ENCODE measurements at regions of chr15 and their contacts with region 1.

Region 1: GRCh38 chr15:57146506-57147201 is 228.2 kb downstream of the TCF12 start:
- DNase-seq: no peak
- ATAC-seq: no peak
- H3K4me3 Mint-ChIP-seq: peak overlapping the region; percentile 48
- H3K27ac Mint-ChIP-seq: no peak overlapping the region
- H3K4me1 Mint-ChIP-seq: peaks cover 16% of the 10 kb centered on the region
- H3K27me3 Mint-ChIP-seq: no peaks in the 10 kb centered on the region
- CTCF ChIP-seq: peak; percentile 42

Region 2: DNA sequence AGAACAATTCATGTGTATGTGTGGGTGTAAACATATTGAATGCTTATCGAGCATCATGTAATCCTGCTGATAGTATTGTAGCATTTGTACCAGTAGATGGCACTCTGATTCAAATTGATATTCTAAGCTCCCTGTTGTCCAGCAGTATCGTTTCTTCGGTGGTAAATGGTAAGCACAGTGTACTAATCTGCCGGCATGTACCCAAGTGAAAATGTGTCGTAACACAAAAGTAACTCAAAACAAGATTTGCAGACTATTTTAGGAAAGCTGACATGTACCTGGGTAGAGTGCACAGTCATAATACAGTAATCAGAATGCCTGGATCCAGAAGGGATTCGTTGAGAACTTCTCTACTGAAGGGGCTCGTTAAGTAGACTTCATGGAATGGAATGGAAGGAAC is 650.0 kb before region 1 on chr15:
- CTCF ChIA-PET with region 1: interaction called, 11 read pairs
- POLR2A ChIA-PET with region 1: no interaction called
- intact Hi-C with region 1: loop called (anchors 1 kb)
- DNase-seq: no peak
- ATAC-seq: peak; percentile 81
- H3K4me3 Mint-ChIP-seq: peak overlapping the region; percentile 20
- H3K27ac Mint-ChIP-seq: no peak overlapping the region
- H3K4me1 Mint-ChIP-seq: peaks cover 4% of the 10 kb centered on the region
- H3K27me3 Mint-ChIP-seq: no peaks in the 10 kb centered on the region
- CTCF ChIP-seq: no peak

Region 3: GRCh38 chr15:56552668-56553067 is 594.0 kb before region 1 on chr15:
- CTCF ChIA-PET with region 1: no interaction called
- POLR2A ChIA-PET with region 1: no interaction called
- intact Hi-C with region 1: no loop called
- DNase-seq: no peak
- ATAC-seq: no peak
- H3K4me3 Mint-ChIP-seq: no peak overlapping the region
- H3K27ac Mint-ChIP-seq: no peak overlapping the region
- H3K4me1 Mint-ChIP-seq: no peaks in the 10 kb centered on the region
- H3K27me3 Mint-ChIP-seq: no peaks in the 10 kb centered on the region
- CTCF ChIP-seq: no peak

Region 4: GRCh38 chr15:57102858-57103257 is 43.8 kb before region 1 on chr15:
- CTCF ChIA-PET with region 1: no interaction called
- POLR2A ChIA-PET with region 1: no interaction called
- intact Hi-C with region 1: no loop called
- DNase-seq: no peak
- ATAC-seq: no peak
- H3K4me3 Mint-ChIP-seq: peak overlapping the region; percentile 62
- H3K27ac Mint-ChIP-seq: peak overlapping the region; percentile 59
- H3K4me1 Mint-ChIP-seq: peaks cover 53% of the 10 kb centered on the region
- H3K27me3 Mint-ChIP-seq: no peaks in the 10 kb centered on the region
- CTCF ChIP-seq: no peak

Region 5: DNA sequence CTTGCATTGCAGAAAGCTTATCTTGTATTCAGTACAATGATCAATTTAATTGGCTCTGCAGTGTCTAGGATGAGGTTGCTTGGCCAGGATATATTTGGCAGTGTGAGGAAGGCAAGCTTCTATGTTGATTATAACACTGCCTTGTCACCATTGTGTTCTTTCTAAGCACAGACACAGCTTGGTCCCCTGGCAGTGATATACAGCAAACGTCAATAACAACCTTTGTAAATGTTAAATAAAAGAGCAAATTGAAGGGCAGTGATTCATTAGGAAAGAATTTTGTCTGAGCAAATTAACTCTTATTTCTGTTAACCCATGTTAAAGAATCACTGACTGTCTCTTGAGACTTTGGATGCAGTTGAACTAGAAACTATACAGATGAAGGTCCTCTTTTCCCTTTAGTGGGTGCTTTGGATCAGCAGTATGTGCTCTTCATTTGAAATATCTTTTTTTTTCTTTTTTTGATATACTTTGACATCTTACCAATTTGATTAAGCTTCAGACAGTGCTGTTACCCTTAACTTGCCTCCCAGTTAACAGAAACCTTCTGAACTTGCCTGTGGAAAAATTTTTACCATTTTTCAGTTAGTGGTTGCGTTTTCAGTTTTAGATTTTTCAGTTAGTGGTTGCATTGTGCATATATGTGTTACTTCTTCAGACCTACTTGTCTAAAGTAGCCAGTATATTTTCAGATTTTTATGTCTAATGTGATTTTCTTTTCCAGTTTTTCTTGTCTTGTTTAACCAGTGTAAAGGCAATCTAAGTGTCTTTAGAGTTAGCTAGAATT is 28.4 kb before region 1 on chr15:
- CTCF ChIA-PET with region 1: no interaction called
- POLR2A ChIA-PET with region 1: no interaction called
- intact Hi-C with region 1: no loop called
- DNase-seq: no peak
- ATAC-seq: no peak
- H3K4me3 Mint-ChIP-seq: no peak overlapping the region
- H3K27ac Mint-ChIP-seq: peak overlapping the region; percentile 50
- H3K4me1 Mint-ChIP-seq: peaks cover 22% of the 10 kb centered on the region
- H3K27me3 Mint-ChIP-seq: no peaks in the 10 kb centered on the region
- CTCF ChIP-seq: no peak

Region 6: GRCh38 chr15:57165992-57166391 is 19.3 kb after region 1 on chr15:
- CTCF ChIA-PET with region 1: interaction called, 11 read pairs
- POLR2A ChIA-PET with region 1: no interaction called
- intact Hi-C with region 1: no loop called
- DNase-seq: no peak
- ATAC-seq: no peak
- H3K4me3 Mint-ChIP-seq: no peak overlapping the region
- H3K27ac Mint-ChIP-seq: no peak overlapping the region
- H3K4me1 Mint-ChIP-seq: peaks cover 13% of the 10 kb centered on the region
- H3K27me3 Mint-ChIP-seq: no peaks in the 10 kb centered on the region
- CTCF ChIP-seq: no peak

Region 7: DNA sequence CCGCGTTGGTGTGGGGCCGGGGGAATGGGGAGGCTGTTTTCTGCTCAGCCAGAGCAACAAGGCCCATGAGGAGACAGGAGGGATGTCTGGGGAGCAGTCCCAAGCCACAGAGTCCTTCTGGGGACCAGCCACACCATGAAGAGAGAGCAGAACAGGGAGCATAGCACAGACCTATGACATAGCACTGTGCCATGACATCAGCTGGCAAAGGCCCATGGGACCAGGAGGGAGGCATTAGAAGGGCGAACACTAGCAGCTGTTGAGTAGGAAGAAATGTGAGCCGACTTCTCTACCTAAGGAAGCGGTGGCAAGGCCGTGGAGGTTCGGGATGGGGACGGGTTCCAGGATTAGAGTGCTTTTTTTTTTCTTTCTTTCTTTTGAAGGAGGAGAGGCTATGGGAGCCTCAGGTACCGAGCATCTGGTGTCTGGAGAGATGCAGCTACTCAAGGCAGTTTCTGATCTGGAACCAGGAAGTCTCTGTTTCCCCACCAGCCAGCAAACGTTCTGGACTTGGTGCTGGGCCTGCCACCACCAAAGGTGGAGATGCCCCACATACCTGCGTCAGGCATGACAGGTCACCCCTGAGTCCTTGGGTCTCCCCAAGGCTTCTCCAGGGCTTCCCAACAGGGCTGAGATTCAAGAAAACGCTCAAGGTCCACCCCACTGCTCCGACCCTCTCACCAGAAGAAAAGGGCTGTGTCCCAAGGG is 152.3 kb after region 1 on chr15:
- CTCF ChIA-PET with region 1: interaction called, 202 read pairs
- POLR2A ChIA-PET with region 1: interaction called, 21 read pairs
- intact Hi-C with region 1: no loop called
- DNase-seq: peak; percentile 42
- ATAC-seq: no peak
- H3K4me3 Mint-ChIP-seq: peak overlapping the region; percentile 97
- H3K27ac Mint-ChIP-seq: peak overlapping the region; percentile 99
- H3K4me1 Mint-ChIP-seq: peaks cover 57% of the 10 kb centered on the region
- H3K27me3 Mint-ChIP-seq: no peaks in the 10 kb centered on the region
- CTCF ChIP-seq: no peak

Region 8: DNA sequence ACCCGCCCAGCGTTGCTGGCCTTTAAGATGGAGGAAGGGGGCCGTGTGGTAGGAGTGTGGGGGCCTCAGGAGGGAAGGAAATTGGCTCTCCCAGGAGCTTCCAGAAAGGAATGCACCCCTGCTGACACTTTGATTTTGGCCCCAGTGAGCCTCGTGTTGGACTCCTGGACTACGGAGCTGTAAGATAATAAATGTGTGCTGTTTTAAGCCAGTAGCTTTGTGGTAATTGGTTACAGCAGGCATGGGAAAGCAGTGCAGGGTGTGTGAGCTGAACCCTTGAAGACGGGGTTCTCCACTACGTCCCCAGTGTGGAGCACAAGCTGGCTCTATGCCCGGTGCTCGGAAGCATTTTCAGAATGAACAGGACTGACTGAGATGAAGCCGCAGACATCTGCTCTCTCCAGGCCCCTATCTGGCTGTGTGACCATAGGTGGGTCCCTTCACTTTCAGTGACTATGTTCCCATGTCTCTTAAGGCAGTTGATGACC is 206.7 kb after region 1 on chr15:
- CTCF ChIA-PET with region 1: no interaction called
- POLR2A ChIA-PET with region 1: no interaction called
- intact Hi-C with region 1: no loop called
- DNase-seq: no peak
- ATAC-seq: no peak
- H3K4me3 Mint-ChIP-seq: no peak overlapping the region
- H3K27ac Mint-ChIP-seq: no peak overlapping the region
- H3K4me1 Mint-ChIP-seq: no peaks in the 10 kb centered on the region
- H3K27me3 Mint-ChIP-seq: peaks cover 2% of the 10 kb centered on the region
- CTCF ChIP-seq: no peak

Region 9: DNA sequence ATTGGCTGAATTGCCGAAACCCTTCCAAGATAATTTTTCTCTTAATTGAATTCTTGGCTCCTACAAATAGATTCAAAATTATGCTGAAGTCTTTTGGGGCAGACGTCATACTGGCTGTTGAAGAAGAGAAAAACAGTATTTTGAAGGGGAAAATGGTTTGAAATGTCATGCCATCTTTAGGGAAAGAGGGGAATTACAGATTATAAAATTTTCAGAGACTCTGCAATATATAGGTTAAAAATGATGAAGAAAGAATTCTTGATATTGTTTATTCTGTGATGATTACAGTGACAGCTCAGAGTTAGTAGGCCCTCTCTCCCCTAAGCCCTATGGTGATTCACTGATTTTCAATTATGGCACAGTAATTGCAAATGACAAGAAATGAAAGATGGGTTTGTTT is 315.7 kb after region 1 on chr15:
- CTCF ChIA-PET with region 1: no interaction called
- POLR2A ChIA-PET with region 1: no interaction called
- intact Hi-C with region 1: loop called (anchors 5 kb)
- DNase-seq: no peak
- ATAC-seq: no peak
- H3K4me3 Mint-ChIP-seq: no peak overlapping the region
- H3K27ac Mint-ChIP-seq: no peak overlapping the region
- H3K4me1 Mint-ChIP-seq: no peaks in the 10 kb centered on the region
- H3K27me3 Mint-ChIP-seq: peaks cover 8% of the 10 kb centered on the region
- CTCF ChIP-seq: no peak

Region 10: GRCh38 chr15:57541805-57542504 is 395.3 kb after region 1 on chr15:
- CTCF ChIA-PET with region 1: interaction called, 15 read pairs
- POLR2A ChIA-PET with region 1: no interaction called
- intact Hi-C with region 1: no loop called
- DNase-seq: no peak
- ATAC-seq: no peak
- H3K4me3 Mint-ChIP-seq: no peak overlapping the region
- H3K27ac Mint-ChIP-seq: no peak overlapping the region
- H3K4me1 Mint-ChIP-seq: no peaks in the 10 kb centered on the region
- H3K27me3 Mint-ChIP-seq: peaks cover 6% of the 10 kb centered on the region
- CTCF ChIP-seq: no peak

Measured in activated B cell treated with CpG ODN at 0.5 μM for 24 hours (primary cell).